A549 (cell line): ENCODE measurements at regions of chr10 and their contacts with region 1.

Region 1: GRCh38 chr10:79468024-79468560 is 22.7 kb upstream of the ZCCHC24 start:
- DNase-seq: no peak
- ATAC-seq: peak in 1 of 2 experiments; percentile 38; a peak in 3 of 6 replicates
- H3K4me3 ChIP-seq: no peak overlapping the region
- H3K27ac ChIP-seq: no peak overlapping the region
- H3K4me1 ChIP-seq: no peaks in the 10 kb centered on the region
- CTCF ChIP-seq: no peak
- EP300 ChIP-seq: no peak
- POLR2A ChIP-seq: no peak
- RAD21 ChIP-seq: no peak

Region 2: DNA sequence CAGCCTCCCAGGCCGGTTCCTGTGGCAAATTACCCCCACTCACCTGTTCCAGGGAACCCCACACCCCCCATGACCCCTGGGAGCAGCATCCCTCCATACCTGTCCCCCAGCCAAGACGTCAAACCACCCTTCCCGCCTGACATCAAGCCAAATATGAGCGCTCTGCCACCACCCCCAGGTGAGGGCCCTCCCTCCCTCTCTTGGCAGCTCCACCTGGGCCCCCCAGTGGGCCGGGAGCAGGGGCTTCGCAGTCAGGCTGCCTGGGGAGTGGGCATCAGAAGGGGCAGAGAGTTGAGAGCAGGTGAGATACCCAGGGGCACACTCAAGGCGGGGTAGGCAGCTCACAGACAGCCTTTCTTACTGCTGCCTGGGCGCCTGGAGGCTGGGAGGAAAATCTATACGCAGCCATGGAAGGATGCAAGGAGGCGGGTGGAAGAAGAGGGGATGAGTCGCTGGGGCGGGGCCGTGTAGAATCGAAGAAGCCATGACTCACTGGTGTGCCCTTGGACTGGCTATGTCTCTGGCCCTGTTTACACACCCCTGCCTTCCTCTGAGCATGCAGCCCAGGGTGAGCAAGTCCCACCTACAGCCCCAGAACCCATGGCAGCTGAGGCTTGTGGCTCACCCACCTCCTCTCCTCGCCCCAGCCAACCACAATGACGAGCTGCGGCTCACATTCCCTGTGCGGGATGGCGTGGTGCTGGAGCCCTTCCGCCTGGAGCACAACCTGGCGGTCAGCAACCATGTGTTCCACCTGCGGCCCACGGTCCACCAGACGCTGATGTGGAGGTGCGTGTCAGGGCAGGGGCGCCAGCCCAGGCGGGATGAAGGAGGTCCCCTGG is 169.5 kb before region 1 on chr10:
- CTCF ChIA-PET with region 1: no interaction called
- POLR2A ChIA-PET with region 1: no interaction called
- DNase-seq: peak; percentile 84 to 87
- ATAC-seq: peak; percentile 84 to 92
- H3K4me3 ChIP-seq: no peak overlapping the region
- H3K27ac ChIP-seq: peak overlapping the region; percentile 62 to 89
- H3K4me1 ChIP-seq: peaks cover 42% of the 10 kb centered on the region
- CTCF ChIP-seq: no peak
- EP300 ChIP-seq: no peak
- POLR2A ChIP-seq: no peak
- RAD21 ChIP-seq: no peak

Region 3: GRCh38 chr10:79445977-79446757 is 21.9 kb before region 1 on chr10:
- CTCF ChIA-PET with region 1: interaction called, 10 read pairs
- POLR2A ChIA-PET with region 1: no interaction called
- DNase-seq: peak in 1 of 2 experiments; percentile 27
- ATAC-seq: peak; percentile 16 to 22
- H3K4me3 ChIP-seq: peak overlapping the region; percentile 75
- H3K27ac ChIP-seq: peak overlapping the region; percentile 13 to 84; a peak in 4 of 6 replicates
- H3K4me1 ChIP-seq: peaks cover 22% of the 10 kb centered on the region
- CTCF ChIP-seq: no peak
- EP300 ChIP-seq: no peak
- POLR2A ChIP-seq: no peak
- RAD21 ChIP-seq: no peak

Region 4: DNA sequence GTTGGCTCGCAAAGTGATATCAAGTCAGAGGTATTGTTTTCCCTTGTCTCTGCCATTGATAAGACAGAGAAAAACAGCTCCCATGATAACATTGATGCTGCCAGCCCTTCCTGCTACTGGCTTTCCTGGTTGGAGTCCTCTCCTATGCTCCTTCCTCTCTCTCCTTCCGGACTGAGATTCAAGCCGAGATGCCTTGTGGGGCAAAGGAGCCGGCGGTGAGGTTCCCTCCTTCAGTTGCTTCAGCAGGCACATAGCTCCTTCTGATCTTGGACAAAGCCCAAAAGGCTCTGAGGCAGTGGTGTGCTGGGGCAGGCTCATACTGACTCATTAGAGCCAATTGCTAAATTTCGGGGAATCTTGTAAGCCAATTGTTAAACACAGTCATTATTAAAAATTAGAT is 13.8 kb before region 1 on chr10:
- CTCF ChIA-PET with region 1: interaction called, 16 read pairs
- POLR2A ChIA-PET with region 1: no interaction called
- DNase-seq: no peak
- ATAC-seq: no peak
- H3K4me3 ChIP-seq: no peak overlapping the region
- H3K27ac ChIP-seq: no peak overlapping the region
- H3K4me1 ChIP-seq: peaks cover 3% of the 10 kb centered on the region
- CTCF ChIP-seq: no peak
- EP300 ChIP-seq: no peak
- POLR2A ChIP-seq: no peak
- RAD21 ChIP-seq: no peak

Region 5: GRCh38 chr10:80553436-80553835 is 1085.3 kb after region 1 on chr10:
- CTCF ChIA-PET with region 1: no interaction called
- POLR2A ChIA-PET with region 1: no interaction called
- DNase-seq: no peak
- ATAC-seq: no peak
- H3K4me3 ChIP-seq: no peak overlapping the region
- H3K27ac ChIP-seq: no peak overlapping the region
- H3K4me1 ChIP-seq: no peaks in the 10 kb centered on the region
- CTCF ChIP-seq: no peak
- EP300 ChIP-seq: no peak
- POLR2A ChIP-seq: no peak
- RAD21 ChIP-seq: no peak